ENCODE measurements at regions of chr1 and their contacts with region 1.

Region 1: GRCh38 chr1:40519517-40519916 is 10.9 kb downstream of the EXO5 start:
- DNase-seq: no peak
- H3K4me3 ChIP-seq: no peak overlapping the region
- H3K27ac ChIP-seq: no peak overlapping the region
- H3K4me1 ChIP-seq: no peaks in the 10 kb centered on the region
- H3K27me3 ChIP-seq: no peaks in the 10 kb centered on the region
- CTCF ChIP-seq: no peak

Region 2: DNA sequence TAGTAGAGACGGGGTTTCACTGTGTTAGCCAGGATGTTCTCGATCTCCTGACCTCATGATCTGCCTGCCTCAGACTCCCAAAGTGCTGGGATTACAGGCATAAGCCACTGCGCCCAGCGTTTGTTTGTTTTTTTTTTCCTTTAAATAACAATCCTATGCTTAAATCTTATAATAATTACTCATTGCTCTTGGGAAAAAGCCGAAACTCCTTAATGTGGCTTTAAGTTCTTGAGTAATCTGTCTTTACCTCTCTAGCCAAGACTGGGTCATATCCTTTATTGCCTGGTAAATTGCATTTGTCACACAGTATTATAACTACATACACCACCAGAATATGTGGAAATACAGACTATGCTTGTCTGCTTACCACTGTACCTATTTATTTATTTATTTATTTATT is 1217.9 kb before region 1 on chr1:
- CTCF ChIA-PET with region 1: no interaction called
- POLR2A ChIA-PET with region 1: interaction called, 10 read pairs
- intact Hi-C with region 1: no loop called
- DNase-seq: no peak
- H3K4me3 ChIP-seq: no peak overlapping the region
- H3K27ac ChIP-seq: no peak overlapping the region
- H3K4me1 ChIP-seq: no peaks in the 10 kb centered on the region
- H3K27me3 ChIP-seq: no peaks in the 10 kb centered on the region
- CTCF ChIP-seq: no peak

Region 3: GRCh38 chr1:40508375-40509341 is 10.9 kb before region 1 on chr1 and contains the start of gene EXO5:
- CTCF ChIA-PET with region 1: no interaction called
- POLR2A ChIA-PET with region 1: interaction called, 12 read pairs
- intact Hi-C with region 1: no loop called
- DNase-seq: peak; percentile 90
- H3K4me3 ChIP-seq: peak within 1 kb of the TSS; percentile 68
- H3K27ac ChIP-seq: peak within 1 kb of the TSS; percentile 76
- H3K4me1 ChIP-seq: peaks cover 3% of the 10 kb centered on the region
- H3K27me3 ChIP-seq: no peaks in the 10 kb centered on the region
- CTCF ChIP-seq: no peak
- total RNA-seq, gene EXO5: 15.1 and 20.3 TPM in 2 replicates

Measured in A673 (cell line).